BJ (cell line): ENCODE measurements at regions of chrX and their contacts with region 1.

Region 1: GRCh38 chrX:136168929-136169735 is 21.8 kb downstream of the FHL1 start:
- DNase-seq: peak; percentile 91
- H3K4me3 ChIP-seq: no peak overlapping the region
- H3K27me3 ChIP-seq: no peaks in the 10 kb centered on the region
- CTCF ChIP-seq: no peak

Region 2: GRCh38 chrX:136028251-136028984 is 140.7 kb before region 1 on chrX:
- CTCF ChIA-PET with region 1: interaction called, 114 read pairs
- POLR2A ChIA-PET with region 1: no interaction called
- DNase-seq: no peak
- H3K4me3 ChIP-seq: no peak overlapping the region
- H3K27me3 ChIP-seq: no peaks in the 10 kb centered on the region
- CTCF ChIP-seq: peak; percentile 48

Region 3: DNA sequence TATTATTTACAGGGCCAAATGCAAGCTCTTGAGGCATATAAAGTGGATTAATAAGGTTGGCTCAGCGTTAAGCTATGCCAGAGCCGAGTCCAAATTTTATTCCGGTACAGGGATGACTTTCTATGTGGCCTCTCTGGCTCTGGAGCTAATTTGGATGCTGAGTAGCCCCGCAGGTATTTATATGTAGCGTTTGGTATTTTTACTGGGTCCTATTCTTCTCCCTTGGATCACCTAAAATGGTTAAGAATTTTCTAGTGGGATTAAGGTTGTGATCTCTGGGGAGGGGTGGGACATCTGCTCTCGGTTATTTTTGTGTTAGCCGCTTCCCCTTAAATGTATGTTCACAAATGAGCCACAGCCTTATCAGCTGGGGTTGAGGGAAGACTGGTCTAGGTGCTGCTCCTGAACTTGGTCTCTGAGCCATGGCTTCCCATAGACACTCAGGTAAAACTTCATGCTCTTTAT is 27.6 kb after region 1 on chrX:
- CTCF ChIA-PET with region 1: interaction called, 11 read pairs
- POLR2A ChIA-PET with region 1: interaction called, 9 read pairs
- DNase-seq: peak; percentile 79
- H3K4me3 ChIP-seq: peak overlapping the region; percentile 57
- H3K27me3 ChIP-seq: no peaks in the 10 kb centered on the region
- CTCF ChIP-seq: no peak

Region 4: GRCh38 chrX:136209016-136209738 is 40.0 kb after region 1 on chrX:
- CTCF ChIA-PET with region 1: interaction called, 17 read pairs
- POLR2A ChIA-PET with region 1: interaction called, 5 read pairs
- DNase-seq: no peak
- H3K4me3 ChIP-seq: no peak overlapping the region
- H3K27me3 ChIP-seq: no peaks in the 10 kb centered on the region
- CTCF ChIP-seq: peak; percentile 51